GM10248 (cell line): ENCODE measurements at regions of chr2 and their contacts with region 1.

Region 1: GRCh38 chr2:218852911-218853667 is 6.5 kb upstream of the WNT6 start:
- DNase-seq: peak; percentile 65
- CTCF ChIP-seq: peak; percentile 88

Region 2: GRCh38 chr2:217816396-217816869 is 1036.7 kb before region 1 on chr2:
- CTCF ChIA-PET with region 1: no interaction called
- POLR2A ChIA-PET with region 1: no interaction called
- DNase-seq: no peak
- CTCF ChIP-seq: no peak

Region 3: GRCh38 chr2:218301176-218301819 is 551.8 kb before region 1 on chr2:
- CTCF ChIA-PET with region 1: interaction called, 14 read pairs
- POLR2A ChIA-PET with region 1: no interaction called
- DNase-seq: peak; percentile 76
- CTCF ChIP-seq: peak; percentile 91

Region 4: GRCh38 chr2:218671654-218672566 is 181.2 kb before region 1 on chr2 and contains the starts of genes RNF25 and STK36:
- CTCF ChIA-PET with region 1: interaction called, 14 read pairs
- POLR2A ChIA-PET with region 1: no interaction called
- DNase-seq: peak; percentile 91
- CTCF ChIP-seq: no peak

Region 5: DNA sequence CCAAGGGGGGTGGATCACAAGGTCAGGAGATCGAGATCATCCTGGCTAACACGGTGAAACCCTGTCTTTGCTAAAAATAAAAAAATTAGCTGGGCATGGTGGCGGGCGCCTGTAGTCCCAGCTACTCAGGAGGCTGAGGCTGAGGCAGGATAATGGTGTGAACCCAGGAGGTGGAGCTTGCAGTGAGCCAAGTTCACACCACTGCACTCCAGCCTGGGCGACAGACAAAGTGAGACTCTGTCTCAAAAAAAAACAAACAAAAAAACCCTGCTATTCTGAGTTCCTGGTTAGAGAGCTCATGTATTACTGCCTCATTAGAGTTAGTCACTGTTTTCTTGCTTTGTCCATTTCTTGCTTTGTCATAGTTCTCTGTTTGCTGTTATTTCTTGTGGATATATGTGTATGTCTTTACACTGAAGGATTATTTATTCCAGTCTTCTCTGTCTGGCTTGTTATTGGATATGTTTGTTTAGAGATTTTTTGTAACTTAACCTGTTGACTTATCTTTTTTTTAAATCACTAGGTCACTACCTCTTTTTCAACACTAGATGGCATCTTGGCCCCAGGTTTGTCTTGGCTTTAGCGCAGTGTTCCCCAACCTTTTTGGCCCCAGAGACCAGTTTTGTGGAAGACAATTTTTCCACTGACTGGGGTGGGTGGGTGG is 125.5 kb before region 1 on chr2:
- CTCF ChIA-PET with region 1: interaction called, 16 read pairs
- POLR2A ChIA-PET with region 1: no interaction called
- DNase-seq: no peak
- CTCF ChIP-seq: peak; percentile 14

Region 6: DNA sequence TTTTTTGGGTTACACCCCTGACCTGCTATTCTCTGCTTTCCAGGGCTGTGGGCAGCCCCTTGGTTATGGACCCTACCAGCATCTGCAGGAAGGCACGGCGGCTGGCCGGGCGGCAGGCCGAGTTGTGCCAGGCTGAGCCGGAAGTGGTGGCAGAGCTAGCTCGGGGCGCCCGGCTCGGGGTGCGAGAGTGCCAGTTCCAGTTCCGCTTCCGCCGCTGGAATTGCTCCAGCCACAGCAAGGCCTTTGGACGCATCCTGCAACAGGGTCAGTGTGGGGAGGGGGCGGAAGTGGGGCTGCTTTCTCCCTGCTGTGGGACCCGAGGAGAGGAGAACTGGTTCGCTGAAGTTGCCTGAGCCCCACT is 17.9 kb after region 1 on chr2:
- CTCF ChIA-PET with region 1: interaction called, 42 read pairs
- POLR2A ChIA-PET with region 1: no interaction called
- DNase-seq: no peak
- CTCF ChIP-seq: no peak

Region 7: DNA sequence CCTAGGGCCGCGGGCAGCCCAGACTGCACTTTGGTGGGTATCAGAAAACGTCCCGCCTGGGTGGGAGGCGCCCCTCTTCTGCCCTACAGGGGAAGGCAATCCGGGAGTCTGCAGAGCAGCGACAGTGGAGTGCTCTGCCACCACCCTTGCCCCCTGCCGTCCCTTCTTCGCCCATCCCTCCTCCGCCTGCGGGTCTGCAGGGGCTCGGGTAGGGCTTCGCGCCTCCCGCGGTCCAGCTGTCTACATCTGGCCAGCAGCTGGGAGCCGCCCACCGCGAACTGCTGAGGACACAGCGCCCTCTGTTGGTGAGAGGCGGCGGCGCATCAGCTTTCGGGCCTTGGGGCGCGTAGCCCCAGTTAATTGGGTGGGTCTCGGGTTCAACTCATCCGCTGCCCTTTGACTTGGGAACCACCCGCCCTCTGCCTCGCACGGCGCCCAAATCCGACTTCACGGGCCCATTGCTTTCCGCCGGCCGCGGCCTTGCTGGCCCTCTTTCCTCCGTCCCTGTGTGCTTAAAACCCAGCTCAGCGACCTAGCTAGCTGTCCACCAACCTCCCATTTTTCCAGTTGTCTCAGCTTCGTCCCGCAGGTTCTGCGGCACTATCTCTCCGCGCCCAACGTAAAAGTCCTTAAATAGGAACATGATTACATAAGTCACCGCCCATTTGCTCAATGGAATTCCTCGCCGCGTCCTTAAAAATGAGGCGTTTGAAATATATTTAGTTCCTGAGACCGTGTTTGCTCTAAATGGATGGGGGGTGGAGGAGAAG is 45.2 kb after region 1 on chr2:
- CTCF ChIA-PET with region 1: interaction called, 89 read pairs
- POLR2A ChIA-PET with region 1: no interaction called
- DNase-seq: peak; percentile 85
- CTCF ChIP-seq: peak; percentile 99

Region 8: GRCh38 chr2:219160186-219161017 is 307.3 kb after region 1 on chr2 and contains the start of gene NHEJ1:
- CTCF ChIA-PET with region 1: no interaction called
- POLR2A ChIA-PET with region 1: no interaction called
- DNase-seq: peak; percentile 97
- CTCF ChIP-seq: peak; percentile 94